Activated naive CD4-positive, alpha-beta T cell treated with anti-CD3 and anti-CD28 coated beads, Interleukin-2, amount 10 ng/mL, durations not matched to agents 7 days and 5 days (primary cell): ENCODE measurements at regions of chr2 and their contacts with region 1.

Region 1: GRCh38 chr2:201860636-201861066 is 54.3 kb downstream of the CDK15 start:
- DNase-seq: peak; percentile 50
- H3K4me3 Mint-ChIP-seq: no peak overlapping the region
- H3K27ac Mint-ChIP-seq: no peak overlapping the region
- H3K4me1 Mint-ChIP-seq: peaks cover 12% of the 10 kb centered on the region
- H3K27me3 Mint-ChIP-seq: peaks cover 37% of the 10 kb centered on the region

Region 2: GRCh38 chr2:201813996-201814760 is 46.5 kb before region 1 on chr2:
- CTCF ChIA-PET with region 1: no interaction called
- DNase-seq: no peak
- H3K4me3 Mint-ChIP-seq: no peak overlapping the region
- H3K27ac Mint-ChIP-seq: no peak overlapping the region
- H3K4me1 Mint-ChIP-seq: no peaks in the 10 kb centered on the region
- H3K27me3 Mint-ChIP-seq: peaks cover 14% of the 10 kb centered on the region

Region 3: DNA sequence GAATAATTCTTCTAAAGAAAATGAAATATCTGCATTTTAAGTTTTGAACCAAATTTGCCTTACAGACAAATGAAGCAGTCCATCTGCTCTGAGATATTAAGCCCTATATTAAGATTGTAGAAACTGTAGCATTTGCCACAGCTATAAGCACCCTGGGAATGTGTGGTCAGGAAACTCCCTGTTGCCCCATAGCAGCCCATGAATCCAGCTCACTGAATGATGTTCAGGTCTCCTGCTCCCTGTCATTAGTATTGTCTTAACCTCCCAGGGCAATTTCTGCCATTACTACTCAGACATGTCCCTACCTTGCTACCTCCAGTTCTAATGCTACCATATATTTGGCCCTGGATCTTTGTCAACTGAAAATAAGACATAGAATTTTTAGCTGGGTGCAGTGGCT is 13.2 kb before region 1 on chr2:
- CTCF ChIA-PET with region 1: interaction called, 10 read pairs
- DNase-seq: no peak
- H3K4me3 Mint-ChIP-seq: no peak overlapping the region
- H3K27ac Mint-ChIP-seq: no peak overlapping the region
- H3K4me1 Mint-ChIP-seq: no peaks in the 10 kb centered on the region
- H3K27me3 Mint-ChIP-seq: peaks cover 8% of the 10 kb centered on the region

Region 4: DNA sequence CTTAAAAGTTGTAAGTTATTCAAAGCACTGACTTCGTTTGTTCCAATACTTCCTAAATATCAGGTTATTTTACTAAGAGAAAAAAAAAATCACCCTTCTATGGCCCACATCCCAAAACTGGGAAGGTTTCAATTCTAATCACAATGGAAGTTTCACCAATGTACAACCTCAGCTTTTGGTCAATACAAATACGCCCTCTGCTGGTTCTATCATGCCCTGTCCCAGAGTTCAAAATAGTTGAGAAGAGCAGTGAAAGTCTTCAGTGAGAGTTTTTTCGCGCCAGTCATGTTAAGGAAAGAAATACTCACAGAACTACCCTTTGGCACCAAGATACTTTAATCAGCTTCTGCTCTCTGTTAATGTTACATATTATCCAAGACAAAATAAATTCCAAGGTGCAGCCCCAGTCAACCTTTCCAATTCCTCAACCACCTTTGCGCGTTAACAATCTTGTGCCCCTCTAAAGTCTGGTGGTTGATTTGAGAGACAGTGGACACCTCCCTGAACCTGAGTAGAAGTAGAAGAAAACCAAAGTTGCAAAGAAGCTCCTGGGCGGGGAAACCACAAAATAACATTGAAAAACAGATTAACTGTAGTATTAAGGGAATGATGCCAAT is 317.8 kb after region 1 on chr2:
- CTCF ChIA-PET with region 1: interaction called, 33 read pairs
- DNase-seq: peak; percentile 67
- H3K4me3 Mint-ChIP-seq: no peak overlapping the region
- H3K27ac Mint-ChIP-seq: no peak overlapping the region
- H3K4me1 Mint-ChIP-seq: peaks cover under 1% of the 10 kb centered on the region
- H3K27me3 Mint-ChIP-seq: peaks cover 6% of the 10 kb centered on the region